ENCODE measurements at regions of chr19 and their contacts with region 1.

Region 1: DNA sequence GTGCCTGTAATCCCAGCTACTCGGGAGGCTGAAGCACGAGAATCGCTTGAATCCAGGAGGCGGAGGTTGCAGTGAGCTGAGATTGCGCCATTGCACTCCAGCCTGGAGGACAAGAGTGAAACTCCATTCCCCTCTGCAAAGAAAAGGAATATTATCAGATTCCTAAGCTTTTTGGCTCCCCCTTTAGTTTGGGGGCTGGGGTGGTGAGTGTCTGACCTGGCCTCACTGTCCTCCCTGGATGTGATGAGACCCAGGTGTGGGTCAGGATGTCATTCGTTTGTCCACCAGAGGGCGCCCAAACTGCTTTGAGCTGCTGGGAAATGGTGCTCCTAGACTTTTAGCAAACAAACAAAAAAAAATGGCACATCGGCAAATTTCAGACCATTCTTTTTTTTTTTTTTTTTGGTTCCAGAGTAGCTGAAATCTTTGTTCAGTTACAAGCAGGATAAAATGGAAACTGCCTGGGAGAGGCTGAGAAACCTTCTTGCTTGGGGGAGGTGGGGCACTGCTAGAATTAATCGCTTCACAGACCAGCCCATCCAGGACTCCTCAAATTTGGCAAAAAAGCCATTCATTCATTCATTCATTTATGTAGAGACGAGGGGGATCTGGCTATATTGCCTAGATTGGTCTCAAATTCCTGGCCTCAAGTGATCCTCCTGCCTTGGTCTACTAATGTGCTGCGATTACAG is 29.4 kb downstream of the SPC24 start:
- DNase-seq: peak; percentile 35 to 88 (median 71)
- ATAC-seq: peak; percentile 63 to 77 (median 74)
- H3K4me3 ChIP-seq: no peak overlapping the region
- H3K4me3 Mint-ChIP-seq: no peak overlapping the region
- H3K27ac ChIP-seq: no peak overlapping the region
- H3K27ac Mint-ChIP-seq: no peak overlapping the region
- H3K4me1 ChIP-seq: peaks cover 0 to 11% of the 10 kb centered on the region in 2 experiments
- H3K4me1 Mint-ChIP-seq: peaks cover 0 to 4% (median 0%) of the 10 kb centered on the region in 3 donors
- H3K27me3 ChIP-seq: no peaks in the 10 kb centered on the region
- H3K27me3 Mint-ChIP-seq: no peaks in the 10 kb centered on the region

Region 2: GRCh38 chr19:11024259-11024658 is 101.9 kb before region 1 on chr19:
- CTCF ChIA-PET with region 1: no interaction called
- POLR2A ChIA-PET with region 1: interaction called in 1 of 2 experiments, 10 read pairs
- DNase-seq: no peak
- ATAC-seq: no peak
- H3K4me3 ChIP-seq: no peak overlapping the region
- H3K4me3 Mint-ChIP-seq: no peak overlapping the region
- H3K27ac ChIP-seq: no peak overlapping the region
- H3K27ac Mint-ChIP-seq: peak overlapping the region in 1 of 2 donors; percentile 11
- H3K4me1 ChIP-seq: no peaks in the 10 kb centered on the region
- H3K4me1 Mint-ChIP-seq: no peaks in the 10 kb centered on the region
- H3K27me3 ChIP-seq: no peaks in the 10 kb centered on the region
- H3K27me3 Mint-ChIP-seq: no peaks in the 10 kb centered on the region

Region 3: GRCh38 chr19:11035441-11036377 is 90.4 kb before region 1 on chr19:
- CTCF ChIA-PET with region 1: interaction called, 3 to 26 read pairs
- POLR2A ChIA-PET with region 1: no interaction called
- DNase-seq: peak; percentile 60 to 92 (median 80)
- ATAC-seq: peak; percentile 88 to 97 (median 94)
- H3K4me3 ChIP-seq: no peak overlapping the region
- H3K4me3 Mint-ChIP-seq: no peak overlapping the region
- H3K27ac ChIP-seq: no peak overlapping the region
- H3K27ac Mint-ChIP-seq: peak overlapping the region; percentile 31 to 61
- H3K4me1 ChIP-seq: peaks cover 0 to 10% of the 10 kb centered on the region in 2 experiments
- H3K4me1 Mint-ChIP-seq: peaks cover 6 to 7% (median 6%) of the 10 kb centered on the region in 3 donors
- H3K27me3 ChIP-seq: no peaks in the 10 kb centered on the region
- H3K27me3 Mint-ChIP-seq: no peaks in the 10 kb centered on the region

Region 4: DNA sequence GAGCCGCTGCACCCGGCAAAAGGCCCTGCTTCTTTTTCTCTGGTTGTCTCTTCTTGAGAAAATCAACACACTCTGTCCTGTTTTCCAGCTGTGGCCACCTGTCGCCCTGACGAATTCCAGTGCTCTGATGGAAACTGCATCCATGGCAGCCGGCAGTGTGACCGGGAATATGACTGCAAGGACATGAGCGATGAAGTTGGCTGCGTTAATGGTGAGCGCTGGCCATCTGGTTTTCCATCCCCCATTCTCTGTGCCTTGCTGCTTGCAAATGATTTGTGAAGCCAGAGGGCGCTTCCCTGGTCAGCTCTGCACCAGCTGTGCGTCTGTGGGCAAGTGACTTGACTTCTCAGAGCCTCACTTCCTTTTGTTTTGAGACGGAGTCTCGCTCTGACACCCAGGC is 19.7 kb before region 1 on chr19:
- CTCF ChIA-PET with region 1: no interaction called
- POLR2A ChIA-PET with region 1: no interaction called
- DNase-seq: no peak
- ATAC-seq: no peak
- H3K4me3 ChIP-seq: no peak overlapping the region
- H3K4me3 Mint-ChIP-seq: no peak overlapping the region
- H3K27ac ChIP-seq: no peak overlapping the region
- H3K27ac Mint-ChIP-seq: no peak overlapping the region
- H3K4me1 ChIP-seq: no peaks in the 10 kb centered on the region
- H3K4me1 Mint-ChIP-seq: no peaks in the 10 kb centered on the region
- H3K27me3 ChIP-seq: no peaks in the 10 kb centered on the region
- H3K27me3 Mint-ChIP-seq: no peaks in the 10 kb centered on the region

Region 5: GRCh38 chr19:11155373-11156120 is 29.4 kb after region 1 on chr19 and contains the start of gene SPC24:
- CTCF ChIA-PET with region 1: no interaction called
- POLR2A ChIA-PET with region 1: no interaction called
- DNase-seq: peak; percentile 71 to 94 (median 82)
- ATAC-seq: peak; percentile 96 to 97 (median 97)
- H3K4me3 ChIP-seq: peak within 1 kb of the TSS; percentile 58 to 70
- H3K4me3 Mint-ChIP-seq: peak within 1 kb of the TSS; percentile 79 to 86 (median 79)
- H3K27ac ChIP-seq: peak within 1 kb of the TSS; percentile 48
- H3K27ac Mint-ChIP-seq: peak within 1 kb of the TSS; percentile 74 to 75
- H3K4me1 ChIP-seq: peaks cover 3 to 18% of the 10 kb centered on the region in 2 experiments
- H3K4me1 Mint-ChIP-seq: peaks cover 10 to 17% (median 14%) of the 10 kb centered on the region in 3 donors
- H3K27me3 ChIP-seq: no peaks in the 10 kb centered on the region
- H3K27me3 Mint-ChIP-seq: no peaks in the 10 kb centered on the region
- total RNA-seq, gene SPC24: 0.95 to 3.6 (median 2.4) TPM